Esophagus muscularis mucosa (tissue), 4 donors: ENCODE measurements at regions of chr10 and their contacts with region 1.

Region 1: GRCh38 chr10:4649886-4650508 is 176.0 kb upstream of the AKR1E2 start:
- DNase-seq: no peak
- H3K4me3 ChIP-seq: no peak overlapping the region
- H3K27ac ChIP-seq: peak overlapping the region; percentile 36 to 71 (median 65)
- H3K4me1 ChIP-seq: peaks cover 23 to 30% (median 26%) of the 10 kb centered on the region in 4 donors
- H3K27me3 ChIP-seq: no peaks in the 10 kb centered on the region
- CTCF ChIP-seq: no peak
- EP300 ChIP-seq: no peak
- POLR2A ChIP-seq: no peak

Region 2: GRCh38 chr10:3472287-3473051 is 1177.5 kb before region 1 on chr10:
- intact Hi-C with region 1: loop called (anchors 10 kb)
- DNase-seq: no peak
- H3K4me3 ChIP-seq: peak overlapping the region; percentile 32 to 44 (median 42)
- H3K27ac ChIP-seq: peak overlapping the region; percentile 83 to 91 (median 90)
- H3K4me1 ChIP-seq: peaks cover 34 to 67% (median 64%) of the 10 kb centered on the region in 4 donors
- H3K27me3 ChIP-seq: no peaks in the 10 kb centered on the region
- CTCF ChIP-seq: no peak
- EP300 ChIP-seq: peak; percentile 89
- POLR2A ChIP-seq: no peak

Region 3: GRCh38 chr10:4767033-4767814 is 117.2 kb after region 1 on chr10:
- intact Hi-C with region 1: no loop called
- DNase-seq: no peak
- H3K4me3 ChIP-seq: no peak overlapping the region
- H3K27ac ChIP-seq: peak overlapping the region in 3 of 4 donors; percentile 6 to 49 (median 20)
- H3K4me1 ChIP-seq: peaks cover 28 to 40% (median 30%) of the 10 kb centered on the region in 4 donors
- H3K27me3 ChIP-seq: no peaks in the 10 kb centered on the region
- CTCF ChIP-seq: peak; percentile 76 to 85 (median 82)
- EP300 ChIP-seq: no peak
- POLR2A ChIP-seq: no peak

Region 4: GRCh38 chr10:5334196-5334880 is 684.3 kb after region 1 on chr10:
- intact Hi-C with region 1: no loop called
- DNase-seq: no peak
- H3K4me3 ChIP-seq: no peak overlapping the region
- H3K27ac ChIP-seq: no peak overlapping the region
- H3K4me1 ChIP-seq: no peaks in the 10 kb centered on the region
- H3K27me3 ChIP-seq: peaks cover 0 to 19% (median 0%) of the 10 kb centered on the region in 4 donors
- CTCF ChIP-seq: no peak
- EP300 ChIP-seq: no peak
- POLR2A ChIP-seq: no peak